Heart left ventricle (tissue), 16 donors: ENCODE measurements at regions of chr14 and their contacts with region 1.

Region 1: DNA sequence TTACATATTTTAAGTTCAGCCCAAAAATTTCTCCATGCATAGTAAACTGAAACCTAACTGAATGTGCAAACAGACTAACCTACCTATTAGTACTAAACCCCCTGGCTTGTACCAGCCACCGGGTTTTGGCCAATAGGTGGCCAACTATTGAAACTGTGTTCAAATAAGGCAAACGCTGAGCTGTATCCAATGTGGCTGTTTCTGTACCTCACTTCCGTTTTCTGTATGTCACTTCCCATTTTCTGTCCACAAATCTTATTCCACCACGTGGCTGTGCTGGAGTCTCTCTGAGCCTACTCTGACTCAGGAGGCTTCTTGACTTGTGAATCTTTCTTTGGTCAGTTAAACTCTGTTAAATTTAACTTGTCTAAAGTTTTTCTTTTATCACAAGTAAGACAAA is 6.0 kb upstream of the FBXO34 start:
- DNase-seq: no peak
- ATAC-seq: no peak
- H3K4me3 ChIP-seq: no peak overlapping the region
- H3K27ac ChIP-seq: no peak overlapping the region
- H3K4me1 ChIP-seq: peaks cover 0 to 3% (median 0%) of the 10 kb centered on the region in 12 donors
- H3K27me3 ChIP-seq: no peaks in the 10 kb centered on the region
- CTCF ChIP-seq: no peak
- POLR2A ChIP-seq: no peak

Region 2: DNA sequence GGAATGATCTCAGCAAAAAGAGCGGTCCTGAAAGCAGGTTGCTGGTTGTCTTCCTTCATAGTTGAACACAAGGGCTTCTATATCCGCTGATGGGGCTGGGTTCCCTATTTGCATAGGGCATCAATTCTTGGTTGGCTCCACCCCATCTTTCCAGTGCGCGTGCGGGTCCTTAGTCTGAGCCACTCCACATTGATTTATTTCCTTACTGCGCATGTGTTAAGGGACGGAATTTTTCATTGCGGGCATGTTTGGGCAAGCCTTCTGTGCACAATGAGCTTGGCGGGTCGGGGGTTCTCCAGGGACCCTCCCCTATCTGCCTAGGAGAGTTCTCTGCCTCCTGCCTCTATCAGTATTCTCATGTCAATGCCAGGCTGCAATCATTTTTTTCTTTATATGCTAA is 52.6 kb before region 1 on chr14:
- intact Hi-C with region 1: loop called in 1 of 10 experiments (anchors 10 kb)
- DNase-seq: no peak
- ATAC-seq: no peak
- H3K4me3 ChIP-seq: no peak overlapping the region
- H3K27ac ChIP-seq: no peak overlapping the region
- H3K4me1 ChIP-seq: no peaks in the 10 kb centered on the region
- H3K27me3 ChIP-seq: no peaks in the 10 kb centered on the region
- CTCF ChIP-seq: no peak
- POLR2A ChIP-seq: no peak

Region 3: GRCh38 chr14:55411426-55412389 is 146.5 kb after region 1 on chr14 and contains the start of gene ATG14:
- intact Hi-C with region 1: loop called in 5 of 10 experiments (anchors 5 to 10 kb)
- DNase-seq: peak; percentile 88 to 90 (median 89)
- ATAC-seq: peak; percentile 96 to 100 (median 100)
- H3K4me3 ChIP-seq: peak within 1 kb of the TSS; percentile 72 to 97 (median 88)
- H3K27ac ChIP-seq: peak within 1 kb of the TSS; percentile 61 to 93 (median 88)
- H3K4me1 ChIP-seq: peaks cover 5 to 33% (median 23%) of the 10 kb centered on the region in 12 donors
- H3K27me3 ChIP-seq: no peaks in the 10 kb centered on the region
- CTCF ChIP-seq: no peak
- POLR2A ChIP-seq: peak in 1 of 2 donors; percentile 57
- total RNA-seq, gene ATG14: 8.7 to 16.2 (median 12.9) TPM